ENCODE measurements at regions of chr11 and their contacts with region 1.

Region 1: GRCh38 chr11:35943713-35944655 is at the start of gene LDLRAD3:
- DNase-seq: peak; percentile 70
- H3K4me3 Mint-ChIP-seq: peak within 1 kb of the TSS; percentile 96
- H3K27ac Mint-ChIP-seq: peak within 1 kb of the TSS; percentile 85
- H3K4me1 Mint-ChIP-seq: peaks cover 19% of the 10 kb centered on the region
- H3K27me3 Mint-ChIP-seq: peaks cover 11% of the 10 kb centered on the region
- CTCF ChIP-seq: no peak
- total RNA-seq, gene LDLRAD3: 10.9 and 16.2 TPM in 2 replicates

Region 2: GRCh38 chr11:35629914-35630313 is 314.1 kb before region 1 on chr11:
- CTCF ChIA-PET with region 1: no interaction called
- intact Hi-C with region 1: loop called (anchors 10 kb)
- DNase-seq: peak; percentile 68
- H3K4me3 Mint-ChIP-seq: no peak overlapping the region
- H3K27ac Mint-ChIP-seq: peak overlapping the region; percentile 90
- H3K4me1 Mint-ChIP-seq: peaks cover 31% of the 10 kb centered on the region
- H3K27me3 Mint-ChIP-seq: no peaks in the 10 kb centered on the region
- CTCF ChIP-seq: no peak

Region 3: DNA sequence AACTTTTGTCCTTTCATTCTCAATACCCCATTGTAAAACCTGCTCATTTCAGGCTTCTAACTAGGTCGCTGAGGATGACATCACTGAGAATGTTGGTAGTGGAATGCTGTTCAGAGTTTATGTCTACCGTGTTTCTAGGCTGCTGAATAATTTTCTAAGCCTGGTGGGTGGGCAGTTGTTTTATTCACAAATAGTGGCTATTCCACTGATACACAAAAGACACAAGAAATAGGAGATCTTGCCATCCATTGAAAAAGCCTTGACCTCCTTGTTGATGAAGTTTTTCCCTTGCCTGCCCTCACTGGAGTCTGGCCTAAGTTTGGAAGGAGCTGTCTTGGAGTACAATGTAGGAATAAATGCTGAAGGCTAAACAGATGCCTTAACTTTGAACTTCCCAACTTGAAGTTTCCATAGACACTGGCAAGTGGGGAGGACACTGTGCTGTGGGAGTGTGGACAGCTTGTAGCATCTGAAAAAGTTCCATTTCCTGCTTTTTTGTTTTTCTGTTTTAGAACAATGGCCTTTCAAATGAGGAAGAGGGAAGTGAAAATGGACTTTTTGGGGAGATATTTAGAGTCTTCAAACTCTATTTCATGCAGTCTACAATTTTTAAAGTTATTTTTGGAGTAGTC is 222.2 kb before region 1 on chr11:
- CTCF ChIA-PET with region 1: no interaction called
- intact Hi-C with region 1: loop called (anchors 10 kb)
- DNase-seq: no peak
- H3K4me3 Mint-ChIP-seq: no peak overlapping the region
- H3K27ac Mint-ChIP-seq: no peak overlapping the region
- H3K4me1 Mint-ChIP-seq: peaks cover 50% of the 10 kb centered on the region
- H3K27me3 Mint-ChIP-seq: no peaks in the 10 kb centered on the region
- CTCF ChIP-seq: no peak

Region 4: GRCh38 chr11:36289226-36289852 is 345.4 kb after region 1 on chr11 and contains the start of gene COMMD9:
- CTCF ChIA-PET with region 1: no interaction called
- intact Hi-C with region 1: no loop called
- DNase-seq: peak; percentile 94
- H3K4me3 Mint-ChIP-seq: peak within 1 kb of the TSS; percentile 91
- H3K27ac Mint-ChIP-seq: peak within 1 kb of the TSS; percentile 91
- H3K4me1 Mint-ChIP-seq: peaks cover 20% of the 10 kb centered on the region
- H3K27me3 Mint-ChIP-seq: no peaks in the 10 kb centered on the region
- CTCF ChIP-seq: no peak
- total RNA-seq, gene COMMD9: 40.7 and 44.1 TPM in 2 replicates